T-cell (primary cell): ENCODE measurements at regions of chr3 and their contacts with region 1.

Region 1: GRCh38 chr3:184505076-184505878 is 56.3 kb upstream of the EPHB3 start:
- DNase-seq: no peak
- ATAC-seq: no peak
- H3K4me3 ChIP-seq: no peak overlapping the region
- H3K4me3 Mint-ChIP-seq: no peak overlapping the region
- H3K27ac ChIP-seq: no peak overlapping the region
- H3K27ac Mint-ChIP-seq: no peak overlapping the region
- H3K4me1 ChIP-seq: no peaks in the 10 kb centered on the region
- H3K4me1 Mint-ChIP-seq: no peaks in the 10 kb centered on the region
- H3K27me3 ChIP-seq: peaks cover 0 to 36% of the 10 kb centered on the region in 2 experiments
- H3K27me3 Mint-ChIP-seq: peaks cover 10 to 46% of the 10 kb centered on the region in 2 donors

Region 2: DNA sequence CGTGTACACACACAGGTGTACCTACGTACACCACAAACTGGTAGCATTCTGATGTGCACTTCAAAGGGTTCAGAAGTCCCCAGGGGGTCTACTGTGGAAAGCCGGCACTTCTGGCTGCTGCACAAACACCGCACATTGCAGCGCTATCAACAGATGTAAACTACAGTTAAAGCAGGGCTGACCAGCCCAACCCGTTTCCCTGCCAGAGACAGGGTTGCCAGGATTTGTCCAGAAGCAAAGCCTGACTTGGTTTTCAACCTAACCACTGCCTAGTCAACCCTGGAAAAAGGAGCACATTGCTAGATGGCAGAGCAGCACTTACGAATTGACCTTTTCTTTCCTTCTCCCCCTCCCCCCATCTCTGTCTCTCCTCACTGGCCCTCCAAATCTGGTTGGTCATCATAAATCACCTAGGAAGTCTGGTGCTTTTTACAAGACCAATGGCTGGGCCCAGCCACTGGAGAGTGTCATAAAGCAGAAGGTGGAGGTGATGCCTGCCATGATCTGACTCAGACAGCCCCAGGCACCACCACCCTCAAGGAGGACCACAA is 539.0 kb before region 1 on chr3:
- CTCF ChIA-PET with region 1: interaction called in 1 of 2 experiments, 10 read pairs
- POLR2A ChIA-PET with region 1: no interaction called
- DNase-seq: no peak
- ATAC-seq: no peak
- H3K4me3 ChIP-seq: no peak overlapping the region
- H3K4me3 Mint-ChIP-seq: no peak overlapping the region
- H3K27ac ChIP-seq: no peak overlapping the region
- H3K27ac Mint-ChIP-seq: no peak overlapping the region
- H3K4me1 ChIP-seq: no peaks in the 10 kb centered on the region
- H3K4me1 Mint-ChIP-seq: no peaks in the 10 kb centered on the region
- H3K27me3 ChIP-seq: no peaks in the 10 kb centered on the region
- H3K27me3 Mint-ChIP-seq: no peaks in the 10 kb centered on the region